PC-3 (cell line): ENCODE measurements at regions of chr9 and their contacts with region 1.

Region 1: DNA sequence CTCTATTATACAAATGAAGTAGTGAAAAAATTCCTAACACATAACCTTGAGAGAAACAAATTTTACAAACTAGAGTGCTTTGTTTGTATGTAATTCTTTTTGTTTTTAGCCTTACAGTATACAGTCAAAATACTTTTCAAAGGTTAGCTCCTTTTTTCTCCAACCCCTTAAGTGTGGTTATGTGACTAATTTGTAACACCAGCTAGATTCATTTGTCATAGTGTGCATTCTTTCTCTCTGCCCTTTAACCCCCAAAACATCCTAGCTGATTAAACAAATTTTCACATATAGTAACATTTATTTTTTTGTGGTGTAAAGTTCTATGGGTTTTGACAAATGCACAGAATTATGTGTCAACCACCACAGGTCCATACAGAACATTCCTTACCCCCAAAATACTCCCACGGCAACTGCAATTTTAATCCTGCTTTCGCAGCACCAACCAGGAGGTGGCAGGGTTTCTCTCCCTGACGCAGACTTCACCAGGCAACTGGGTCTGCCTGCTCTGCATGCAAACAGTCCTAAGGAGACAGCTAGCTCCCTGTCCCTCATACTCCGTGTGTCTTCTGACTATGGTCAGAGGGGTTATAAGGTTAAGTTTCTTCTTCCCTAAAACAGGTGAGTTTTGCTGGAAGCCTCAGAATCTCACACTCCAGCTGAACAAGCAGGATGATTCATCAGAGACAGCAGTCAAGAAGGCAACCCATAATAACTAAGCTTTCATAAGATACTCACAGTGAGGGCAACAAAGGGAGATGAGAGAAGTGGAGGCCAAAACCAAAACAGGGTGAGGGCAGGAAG is 44.5 kb upstream of the NR5A1 start:
- DNase-seq: peak; percentile 64
- ATAC-seq: peak; percentile 88
- H3K4me3 ChIP-seq: no peak overlapping the region
- H3K27ac ChIP-seq: no peak overlapping the region
- H3K4me1 ChIP-seq: peaks cover 13% of the 10 kb centered on the region; the same call in 1 of the 2 replicates
- H3K27me3 ChIP-seq: no peaks in the 10 kb centered on the region
- CTCF ChIP-seq: peak; percentile 84

Region 2: GRCh38 chr9:124399323-124399967 is 152.2 kb before region 1 on chr9:
- CTCF ChIA-PET with region 1: no interaction called
- POLR2A ChIA-PET with region 1: no interaction called
- intact Hi-C with region 1: no loop called
- DNase-seq: no peak
- ATAC-seq: no peak
- H3K4me3 ChIP-seq: no peak overlapping the region
- H3K27ac ChIP-seq: no peak overlapping the region
- H3K4me1 ChIP-seq: peaks cover under 1% of the 10 kb centered on the region
- H3K27me3 ChIP-seq: no peaks in the 10 kb centered on the region
- CTCF ChIP-seq: no peak

Region 3: GRCh38 chr9:124532897-124533296 is 18.8 kb before region 1 on chr9:
- CTCF ChIA-PET with region 1: interaction called, 12 read pairs
- POLR2A ChIA-PET with region 1: no interaction called
- intact Hi-C with region 1: no loop called
- DNase-seq: no peak
- ATAC-seq: no peak
- H3K4me3 ChIP-seq: no peak overlapping the region
- H3K27ac ChIP-seq: no peak overlapping the region
- H3K4me1 ChIP-seq: peaks cover 3% of the 10 kb centered on the region
- H3K27me3 ChIP-seq: no peaks in the 10 kb centered on the region
- CTCF ChIP-seq: no peak

Region 4: GRCh38 chr9:124617471-124618141 is 65.9 kb after region 1 on chr9:
- CTCF ChIA-PET with region 1: interaction called, 18 read pairs
- POLR2A ChIA-PET with region 1: no interaction called
- intact Hi-C with region 1: loop called (anchors 1 kb)
- DNase-seq: peak; percentile 78
- ATAC-seq: peak; percentile 96
- H3K4me3 ChIP-seq: no peak overlapping the region
- H3K27ac ChIP-seq: no peak overlapping the region
- H3K4me1 ChIP-seq: peaks cover 11% of the 10 kb centered on the region
- H3K27me3 ChIP-seq: no peaks in the 10 kb centered on the region
- CTCF ChIP-seq: peak; percentile 88

Region 5: DNA sequence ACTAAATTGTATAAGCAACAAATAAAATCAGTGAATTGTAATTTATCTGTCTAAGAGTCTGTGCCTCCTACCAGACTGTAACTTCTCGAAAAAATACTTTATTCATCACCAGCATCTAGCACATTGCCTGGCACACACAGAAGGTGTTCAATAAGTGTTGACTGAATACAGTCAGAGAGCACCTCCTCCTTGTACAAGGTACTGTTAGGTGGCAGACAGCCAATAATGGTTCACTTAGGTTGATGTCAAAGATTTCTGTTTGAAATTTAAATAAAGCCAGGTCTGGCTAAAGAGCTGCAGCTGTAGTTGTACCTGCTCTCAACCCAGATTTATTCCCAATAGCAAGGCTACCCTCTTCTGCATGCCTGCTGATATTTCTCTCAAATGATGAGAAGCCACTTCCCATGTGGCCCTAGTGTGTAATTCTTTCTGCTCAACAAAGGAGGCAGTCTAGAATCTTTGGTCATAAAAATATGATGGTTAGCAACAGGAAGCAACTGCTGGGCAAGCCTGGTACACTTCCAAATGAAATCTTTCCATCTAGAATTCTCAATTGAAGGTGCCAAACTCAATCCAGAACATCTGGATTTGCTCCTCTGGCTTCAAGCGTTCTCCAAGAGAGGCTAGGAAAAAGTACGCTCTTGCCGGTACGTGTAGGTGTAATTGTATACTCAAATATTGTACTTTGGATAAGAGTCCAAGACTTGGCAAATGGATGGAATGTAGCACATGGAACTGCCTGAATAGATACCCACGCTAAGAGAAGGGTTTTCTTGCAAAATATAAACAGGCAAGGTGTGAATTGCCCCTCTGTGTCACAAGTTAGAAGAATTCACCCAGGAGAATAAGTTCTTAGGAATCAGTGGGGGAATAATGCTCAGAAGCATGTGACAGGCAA is 123.8 kb after region 1 on chr9:
- CTCF ChIA-PET with region 1: no interaction called
- POLR2A ChIA-PET with region 1: no interaction called
- intact Hi-C with region 1: no loop called
- DNase-seq: no peak
- ATAC-seq: no peak
- H3K4me3 ChIP-seq: no peak overlapping the region
- H3K27ac ChIP-seq: no peak overlapping the region
- H3K4me1 ChIP-seq: no peaks in the 10 kb centered on the region
- H3K27me3 ChIP-seq: no peaks in the 10 kb centered on the region
- CTCF ChIP-seq: 0 out of 2 replicates have a peak, but pooled peaks have one; percentile 21

Region 6: DNA sequence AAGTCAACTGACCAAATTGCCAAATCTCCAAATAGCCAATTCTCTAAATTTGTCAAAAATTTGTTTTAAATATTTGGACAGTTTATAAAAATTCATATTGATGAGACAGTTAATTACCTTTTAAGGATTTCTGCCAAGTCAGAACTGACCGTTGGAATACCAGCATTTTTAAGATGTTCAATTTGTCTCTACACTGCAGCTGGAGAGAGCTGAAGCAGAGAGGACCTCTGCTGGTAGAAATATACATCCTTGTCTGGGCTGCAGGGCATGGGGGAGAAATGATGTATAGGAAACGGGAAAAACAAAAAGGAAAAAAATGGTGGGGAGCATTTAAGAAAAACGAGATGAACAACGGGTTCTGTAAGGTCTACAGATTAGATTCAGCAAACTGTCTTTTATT is 202.6 kb after region 1 on chr9:
- CTCF ChIA-PET with region 1: no interaction called
- POLR2A ChIA-PET with region 1: no interaction called
- intact Hi-C with region 1: loop called (anchors 5 kb)
- DNase-seq: peak; percentile 32
- ATAC-seq: peak; percentile 78
- H3K4me3 ChIP-seq: no peak overlapping the region
- H3K27ac ChIP-seq: no peak overlapping the region
- H3K4me1 ChIP-seq: 0 out of 2 replicates have a peak, but pooled peaks cover 2% of the 10 kb centered on the region
- H3K27me3 ChIP-seq: no peaks in the 10 kb centered on the region
- CTCF ChIP-seq: peak; percentile 64